ENCODE measurements at regions of chr16 and their contacts with region 1.

Region 1: GRCh38 chr16:30370444-30371247 is at the start of gene TBC1D10B:
- H3K4me3 ChIP-seq: peak within 1 kb of the TSS; percentile 74
- H3K27ac ChIP-seq: peak within 1 kb of the TSS; percentile 78
- H3K4me1 ChIP-seq: peaks cover 7% of the 10 kb centered on the region
- CTCF ChIP-seq: no peak

Region 2: DNA sequence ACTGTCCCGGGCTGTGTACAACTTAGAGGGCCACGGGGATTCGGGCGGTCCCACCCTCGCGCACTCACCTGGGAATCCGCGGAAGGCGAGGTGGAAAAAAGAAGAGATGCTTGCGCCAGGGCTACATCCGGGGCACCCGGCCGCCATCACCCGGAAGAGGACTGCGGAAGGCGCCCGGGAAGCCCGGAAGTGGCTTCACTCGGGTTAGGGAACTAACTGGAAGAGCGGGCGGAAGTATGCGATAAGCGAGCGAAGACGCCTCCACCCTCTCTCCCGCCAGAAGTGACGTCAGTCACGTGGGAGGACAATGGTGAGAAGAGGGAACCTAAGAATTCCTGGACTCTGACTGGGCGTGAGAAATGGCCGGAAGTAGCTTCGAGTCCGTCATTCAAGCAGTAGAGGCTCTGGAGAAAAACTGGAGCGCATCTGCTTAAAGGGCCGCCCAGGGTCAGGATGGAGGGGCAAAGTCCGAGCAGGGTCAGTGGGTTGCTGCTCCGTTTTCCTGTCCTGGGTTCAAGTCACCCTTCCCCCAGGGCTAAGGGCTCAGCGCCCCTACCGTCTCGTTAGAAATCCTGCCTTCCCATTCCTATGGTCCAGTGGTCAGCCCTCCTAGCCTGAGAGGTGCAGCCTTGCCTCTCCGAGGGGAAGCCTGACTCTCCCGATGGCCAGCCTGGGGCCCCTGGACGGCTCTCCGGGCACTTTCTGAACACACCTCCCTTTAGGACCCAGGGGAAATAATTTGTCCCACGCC is 15.3 kb before region 1 on chr16 and contains the start of gene CD2BP2:
- CTCF ChIA-PET with region 1: interaction called, 4 read pairs
- POLR2A ChIA-PET with region 1: interaction called, 60 read pairs
- H3K4me3 ChIP-seq: peak within 1 kb of the TSS; percentile 95
- H3K27ac ChIP-seq: peak within 1 kb of the TSS; percentile 82
- H3K4me1 ChIP-seq: no peaks in the 10 kb centered on the region
- CTCF ChIP-seq: peak; percentile 63

Region 3: DNA sequence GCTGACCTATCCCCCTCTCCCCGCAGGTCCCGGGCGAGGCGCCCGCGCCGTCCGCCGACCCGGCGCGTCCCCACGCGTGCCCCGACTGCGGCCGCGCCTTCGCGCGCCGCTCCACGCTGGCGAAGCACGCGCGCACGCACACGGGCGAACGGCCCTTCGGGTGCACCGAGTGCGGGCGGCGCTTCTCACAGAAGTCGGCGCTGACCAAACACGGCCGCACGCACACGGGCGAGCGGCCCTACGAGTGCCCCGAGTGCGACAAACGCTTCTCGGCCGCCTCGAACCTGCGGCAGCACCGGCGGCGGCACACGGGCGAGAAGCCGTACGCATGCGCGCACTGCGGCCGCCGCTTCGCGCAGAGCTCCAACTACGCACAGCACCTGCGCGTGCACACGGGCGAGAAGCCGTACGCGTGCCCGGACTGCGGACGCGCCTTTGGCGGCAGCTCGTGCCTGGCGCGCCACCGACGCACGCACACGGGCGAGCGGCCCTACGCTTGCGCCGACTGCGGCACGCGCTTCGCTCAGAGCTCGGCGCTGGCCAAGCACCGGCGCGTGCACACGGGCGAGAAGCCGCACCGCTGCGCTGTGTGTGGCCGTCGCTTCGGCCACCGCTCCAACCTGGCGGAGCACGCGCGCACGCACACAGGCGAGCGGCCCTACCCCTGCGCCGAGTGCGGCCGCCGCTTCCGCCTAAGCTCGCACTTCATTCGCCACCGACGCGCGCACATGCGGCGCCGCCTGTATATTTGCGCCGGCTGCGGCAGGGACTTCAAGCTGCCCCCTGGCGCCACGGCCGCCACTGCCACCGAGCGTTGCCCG is 47.1 kb after region 1 on chr16:
- CTCF ChIA-PET with region 1: no interaction called
- POLR2A ChIA-PET with region 1: interaction called, 17 read pairs
- H3K4me3 ChIP-seq: peak overlapping the region; percentile 37
- H3K27ac ChIP-seq: peak overlapping the region; percentile 85
- H3K4me1 ChIP-seq: peaks cover 12% of the 10 kb centered on the region
- CTCF ChIP-seq: peak; percentile 89

Region 4: DNA sequence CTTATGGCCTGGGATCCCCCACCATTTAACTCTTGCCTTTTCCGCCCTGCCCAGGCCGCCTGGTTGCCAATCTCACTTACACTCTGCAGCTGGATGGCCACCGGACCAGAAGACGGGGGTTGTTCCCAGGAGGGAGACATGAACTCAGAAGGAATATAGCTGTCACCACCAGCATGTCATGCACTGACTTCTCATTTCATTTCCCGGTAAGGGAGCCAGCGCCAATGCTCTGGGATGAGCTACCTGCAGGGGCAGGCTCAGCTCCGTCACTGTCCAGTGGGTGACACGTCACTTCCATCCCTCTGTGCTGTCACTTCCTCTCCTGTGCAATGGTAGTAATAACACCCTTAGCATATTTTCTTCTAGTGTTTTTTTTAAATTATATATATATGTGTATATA is 128.6 kb after region 1 on chr16:
- CTCF ChIA-PET with region 1: no interaction called
- POLR2A ChIA-PET with region 1: no interaction called
- H3K4me3 ChIP-seq: no peak overlapping the region
- H3K27ac ChIP-seq: no peak overlapping the region
- H3K4me1 ChIP-seq: no peaks in the 10 kb centered on the region
- CTCF ChIP-seq: no peak

Region 5: DNA sequence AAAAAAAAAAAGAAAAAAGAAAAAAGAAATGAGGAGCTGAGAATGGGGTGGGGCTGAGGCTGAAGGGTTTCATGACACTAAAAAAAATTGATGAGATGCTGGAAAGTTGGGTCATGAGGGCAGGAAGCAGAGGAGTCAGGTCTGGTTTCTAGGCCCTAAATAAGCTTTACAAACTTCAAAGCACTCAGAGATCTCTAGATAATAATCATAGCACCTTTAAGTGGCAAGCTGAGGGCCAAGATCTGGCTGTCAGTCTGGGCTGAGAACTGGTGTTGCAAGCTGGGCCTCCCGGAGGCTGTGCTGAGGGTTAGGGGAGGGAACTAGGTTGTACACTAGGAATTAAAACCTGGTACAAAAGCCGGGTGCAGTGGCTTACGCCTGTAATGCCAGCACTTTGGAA is 181.1 kb after region 1 on chr16:
- CTCF ChIA-PET with region 1: no interaction called
- POLR2A ChIA-PET with region 1: no interaction called
- H3K4me3 ChIP-seq: no peak overlapping the region
- H3K27ac ChIP-seq: no peak overlapping the region
- H3K4me1 ChIP-seq: peaks cover 11% of the 10 kb centered on the region
- CTCF ChIP-seq: no peak